HepG2 (cell line): ENCODE measurements at regions of chr11 and their contacts with region 1.

Region 1: DNA sequence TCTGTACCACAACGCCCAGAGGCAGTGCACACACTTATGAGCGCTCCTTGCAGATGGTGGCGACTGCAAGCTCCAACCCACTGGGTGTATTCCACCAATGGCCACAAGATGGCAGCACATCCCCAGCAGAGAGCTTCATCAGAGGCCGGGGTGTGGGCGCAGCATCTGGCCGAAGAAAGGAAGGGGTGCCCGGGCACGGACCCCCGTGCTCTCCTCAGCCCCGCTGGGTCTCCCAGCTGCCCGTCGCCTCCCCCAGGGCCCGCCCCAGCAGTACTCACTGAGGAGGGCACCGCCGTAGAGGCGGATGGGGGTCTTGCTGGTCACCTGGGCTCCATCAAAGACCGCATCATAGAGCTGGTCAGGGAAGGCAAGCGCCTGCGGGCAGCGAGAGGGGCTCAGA is 14.2 kb downstream of the TP53I11 start:
- DNase-seq: peak; percentile 50
- ATAC-seq: peak; percentile 89
- H3K4me3 ChIP-seq: no peak overlapping the region
- H3K27ac ChIP-seq: no peak overlapping the region
- H3K4me1 ChIP-seq: no peaks in the 10 kb centered on the region
- H3K27me3 ChIP-seq: peaks cover 10 to 40% of the 10 kb centered on the region in 2 experiments; a peak in 4 of 5 replicates
- CTCF ChIP-seq: peak; percentile 92
- EP300 ChIP-seq: no peak
- POLR2A ChIP-seq: no peak
- RAD21 ChIP-seq: peak; percentile 91

Region 2: DNA sequence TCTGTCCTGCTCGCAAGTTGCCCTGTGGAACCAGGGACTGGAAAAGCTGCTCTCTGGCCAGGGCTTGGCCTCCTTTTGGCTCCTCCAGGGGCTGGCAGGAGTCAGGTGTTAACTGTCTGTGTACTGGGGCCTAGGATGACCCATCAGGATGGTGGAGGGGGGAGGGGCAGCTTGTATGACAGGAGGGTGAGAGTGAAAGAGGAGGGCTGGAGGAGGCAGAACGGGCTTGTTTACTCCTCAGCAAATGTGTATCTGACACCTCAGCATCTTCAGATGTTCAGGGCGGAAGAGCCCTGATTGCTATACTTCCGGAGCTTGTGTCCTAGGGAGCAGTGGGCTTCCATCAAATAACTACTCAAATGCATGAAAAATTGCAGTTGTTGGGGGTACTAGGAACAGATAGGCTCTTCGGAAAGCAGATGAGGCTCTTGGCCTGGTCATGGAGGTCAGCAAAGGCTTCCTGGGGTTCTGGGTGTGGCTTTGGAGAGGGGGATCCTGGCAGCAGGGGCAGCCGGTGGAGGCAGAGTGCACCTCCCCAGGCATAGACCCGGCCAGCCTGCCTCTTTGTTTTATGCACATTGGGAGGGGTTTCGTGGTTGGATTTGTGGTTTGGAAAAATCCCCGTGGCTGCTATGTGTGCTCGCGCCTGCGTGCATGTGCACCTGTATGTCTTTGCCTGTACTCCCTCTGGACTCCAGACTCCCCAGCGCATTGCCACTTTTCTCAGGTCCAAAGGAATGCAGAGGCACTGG is 339.8 kb before region 1 on chr11:
- CTCF ChIA-PET with region 1: no interaction called
- POLR2A ChIA-PET with region 1: no interaction called
- in situ Hi-C with region 1: no loop called
- intact Hi-C with region 1: no loop called
- DNase-seq: no peak
- ATAC-seq: no peak
- H3K4me3 ChIP-seq: no peak overlapping the region
- H3K27ac ChIP-seq: no peak overlapping the region
- H3K4me1 ChIP-seq: no peaks in the 10 kb centered on the region
- H3K27me3 ChIP-seq: peaks cover 8 to 12% of the 10 kb centered on the region in 2 experiments; a peak in 3 of 5 replicates
- CTCF ChIP-seq: no peak
- EP300 ChIP-seq: no peak
- POLR2A ChIP-seq: no peak
- RAD21 ChIP-seq: no peak

Region 3: DNA sequence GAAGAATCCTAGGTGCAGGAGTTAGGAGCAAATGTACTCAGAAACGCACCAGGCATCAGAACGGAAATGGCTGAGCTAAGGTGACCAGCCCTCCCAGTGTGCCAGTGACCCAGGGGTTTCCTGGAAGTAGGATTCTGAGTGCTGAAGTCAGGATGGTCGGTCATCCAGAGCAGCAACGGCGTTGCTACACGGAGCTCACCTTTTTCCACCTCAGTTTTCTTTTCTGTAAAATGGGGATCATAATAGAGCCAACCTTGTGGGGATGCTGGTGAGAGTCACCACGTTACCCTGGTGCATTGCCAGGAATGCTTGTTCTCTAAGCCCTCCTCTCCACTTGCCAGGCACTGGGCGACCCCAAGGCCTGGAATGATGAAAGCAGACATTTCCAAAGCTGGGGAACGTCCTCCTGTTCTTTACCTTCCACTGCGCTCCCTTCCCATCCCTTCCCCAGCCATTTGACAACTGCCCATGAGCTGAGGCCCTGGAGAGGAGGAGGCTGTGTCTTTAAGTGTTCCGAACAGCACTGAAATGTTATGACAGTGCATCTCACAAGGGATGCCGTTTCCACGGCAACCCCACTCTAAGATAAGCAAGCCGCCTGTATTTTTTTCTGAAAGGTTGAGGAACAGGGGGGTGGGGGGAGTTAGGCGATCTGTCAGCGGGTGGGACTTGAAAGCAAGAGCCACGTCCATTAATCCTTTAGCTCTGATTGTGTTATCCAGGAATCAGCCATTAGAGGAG is 143.0 kb before region 1 on chr11:
- CTCF ChIA-PET with region 1: no interaction called
- POLR2A ChIA-PET with region 1: no interaction called
- in situ Hi-C with region 1: no loop called
- intact Hi-C with region 1: no loop called
- DNase-seq: no peak
- ATAC-seq: no peak
- H3K4me3 ChIP-seq: no peak overlapping the region
- H3K27ac ChIP-seq: no peak overlapping the region
- H3K4me1 ChIP-seq: no peaks in the 10 kb centered on the region
- H3K27me3 ChIP-seq: peaks cover 2 to 11% of the 10 kb centered on the region in 2 experiments; a peak in 2 of 5 replicates
- CTCF ChIP-seq: no peak
- EP300 ChIP-seq: no peak
- POLR2A ChIP-seq: no peak
- RAD21 ChIP-seq: no peak

Region 4: GRCh38 chr11:45017329-45017728 is 80.8 kb after region 1 on chr11:
- CTCF ChIA-PET with region 1: no interaction called
- POLR2A ChIA-PET with region 1: no interaction called
- in situ Hi-C with region 1: no loop called
- intact Hi-C with region 1: loop called (anchors 2 kb)
- DNase-seq: no peak
- ATAC-seq: peak; percentile 48; the same call in 1 of the 3 replicates
- H3K4me3 ChIP-seq: no peak overlapping the region
- H3K27ac ChIP-seq: no peak overlapping the region
- H3K4me1 ChIP-seq: no peaks in the 10 kb centered on the region
- H3K27me3 ChIP-seq: peaks cover 3% of the 10 kb centered on the region in 2 experiments; a peak in 1 of 5 replicates
- CTCF ChIP-seq: no peak
- EP300 ChIP-seq: no peak
- POLR2A ChIP-seq: no peak
- RAD21 ChIP-seq: no peak

Region 5: GRCh38 chr11:45102810-45103621 is 166.5 kb after region 1 on chr11:
- CTCF ChIA-PET with region 1: interaction called, 39 read pairs
- POLR2A ChIA-PET with region 1: interaction called, 4 read pairs
- in situ Hi-C with region 1: loop called (anchors 5 kb)
- intact Hi-C with region 1: loop called (anchors 1 kb)
- DNase-seq: peak; percentile 48
- ATAC-seq: peak; percentile 56
- H3K4me3 ChIP-seq: no peak overlapping the region
- H3K27ac ChIP-seq: no peak overlapping the region
- H3K4me1 ChIP-seq: peaks cover 17% of the 10 kb centered on the region
- H3K27me3 ChIP-seq: peaks cover 2 to 7% of the 10 kb centered on the region in 2 experiments; a peak in 1 of 5 replicates
- CTCF ChIP-seq: peak; percentile 88
- EP300 ChIP-seq: no peak
- POLR2A ChIP-seq: no peak
- RAD21 ChIP-seq: peak; percentile 71

Region 6: GRCh38 chr11:45289369-45289768 is 352.8 kb after region 1 on chr11:
- CTCF ChIA-PET with region 1: no interaction called
- POLR2A ChIA-PET with region 1: no interaction called
- in situ Hi-C with region 1: no loop called
- intact Hi-C with region 1: loop called (anchors 1 kb)
- DNase-seq: no peak
- ATAC-seq: no peak
- H3K4me3 ChIP-seq: no peak overlapping the region
- H3K27ac ChIP-seq: no peak overlapping the region
- H3K4me1 ChIP-seq: no peaks in the 10 kb centered on the region
- H3K27me3 ChIP-seq: peaks cover 4 to 27% of the 10 kb centered on the region in 2 experiments; a peak in 4 of 5 replicates
- CTCF ChIP-seq: no peak
- EP300 ChIP-seq: no peak
- POLR2A ChIP-seq: no peak
- RAD21 ChIP-seq: no peak

Region 7: DNA sequence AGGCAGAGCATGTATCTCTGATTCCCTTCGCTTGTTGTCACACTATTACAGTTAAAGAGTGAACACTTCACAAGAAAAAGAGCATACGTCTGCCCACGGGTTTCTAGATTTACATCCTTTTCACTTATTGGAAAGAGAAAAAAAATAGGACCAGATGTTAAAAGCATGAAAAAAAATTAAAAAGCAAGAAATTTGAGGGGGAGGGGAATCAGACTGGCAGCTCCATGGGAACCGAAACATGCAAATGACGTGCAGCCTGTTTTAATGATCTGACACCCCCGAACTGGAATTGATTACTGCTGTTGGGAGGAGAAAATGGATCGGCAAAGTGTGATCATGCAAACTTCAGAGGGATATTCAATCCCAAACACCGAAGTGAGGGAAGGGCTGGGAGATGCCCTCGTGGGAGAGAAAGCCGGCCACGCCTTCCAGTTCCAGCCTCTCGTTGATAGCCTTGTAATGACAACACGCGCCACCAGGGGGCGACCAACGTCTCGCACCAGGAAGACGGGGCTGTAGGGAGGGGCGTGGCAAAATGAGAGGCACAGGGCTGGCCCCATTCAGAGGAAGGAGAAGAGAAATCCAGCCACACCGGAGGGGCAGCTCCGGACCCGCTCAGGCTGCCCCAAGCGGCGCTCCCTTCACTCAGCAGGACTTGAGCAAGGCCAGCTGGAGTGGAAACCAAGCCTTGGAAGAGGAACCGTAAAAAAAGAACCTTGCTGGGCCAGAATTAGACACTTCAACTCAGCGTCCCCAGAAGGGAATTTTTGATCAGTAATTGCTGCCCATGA is 403.4 kb after region 1 on chr11:
- CTCF ChIA-PET with region 1: no interaction called
- POLR2A ChIA-PET with region 1: no interaction called
- in situ Hi-C with region 1: loop called (anchors 10 kb)
- intact Hi-C with region 1: no loop called
- DNase-seq: peak; percentile 78
- ATAC-seq: peak; percentile 98
- H3K4me3 ChIP-seq: no peak overlapping the region
- H3K27ac ChIP-seq: no peak overlapping the region
- H3K4me1 ChIP-seq: no peaks in the 10 kb centered on the region
- H3K27me3 ChIP-seq: peaks cover 2 to 6% of the 10 kb centered on the region in 2 experiments; a peak in 3 of 5 replicates
- CTCF ChIP-seq: peak; percentile 92
- EP300 ChIP-seq: no peak
- POLR2A ChIP-seq: no peak
- RAD21 ChIP-seq: peak; percentile 53